Naive thymus-derived CD8-positive, alpha-beta T cell (primary cell): ENCODE measurements at regions of chr6 and their contacts with region 1.

Region 1: GRCh38 chr6:43143235-43144124 is 27.6 kb upstream of the SRF start:
- DNase-seq: peak; percentile 72 to 89 (median 82)
- ATAC-seq: peak; percentile 73 to 80
- H3K4me3 Mint-ChIP-seq: peak overlapping the region; percentile 14 to 94 (median 89)
- H3K27ac Mint-ChIP-seq: peak overlapping the region; percentile 52 to 100 (median 99)
- H3K4me1 Mint-ChIP-seq: peaks cover 16 to 40% (median 31%) of the 10 kb centered on the region in 4 donors
- H3K27me3 Mint-ChIP-seq: no peaks in the 10 kb centered on the region

Region 2: DNA sequence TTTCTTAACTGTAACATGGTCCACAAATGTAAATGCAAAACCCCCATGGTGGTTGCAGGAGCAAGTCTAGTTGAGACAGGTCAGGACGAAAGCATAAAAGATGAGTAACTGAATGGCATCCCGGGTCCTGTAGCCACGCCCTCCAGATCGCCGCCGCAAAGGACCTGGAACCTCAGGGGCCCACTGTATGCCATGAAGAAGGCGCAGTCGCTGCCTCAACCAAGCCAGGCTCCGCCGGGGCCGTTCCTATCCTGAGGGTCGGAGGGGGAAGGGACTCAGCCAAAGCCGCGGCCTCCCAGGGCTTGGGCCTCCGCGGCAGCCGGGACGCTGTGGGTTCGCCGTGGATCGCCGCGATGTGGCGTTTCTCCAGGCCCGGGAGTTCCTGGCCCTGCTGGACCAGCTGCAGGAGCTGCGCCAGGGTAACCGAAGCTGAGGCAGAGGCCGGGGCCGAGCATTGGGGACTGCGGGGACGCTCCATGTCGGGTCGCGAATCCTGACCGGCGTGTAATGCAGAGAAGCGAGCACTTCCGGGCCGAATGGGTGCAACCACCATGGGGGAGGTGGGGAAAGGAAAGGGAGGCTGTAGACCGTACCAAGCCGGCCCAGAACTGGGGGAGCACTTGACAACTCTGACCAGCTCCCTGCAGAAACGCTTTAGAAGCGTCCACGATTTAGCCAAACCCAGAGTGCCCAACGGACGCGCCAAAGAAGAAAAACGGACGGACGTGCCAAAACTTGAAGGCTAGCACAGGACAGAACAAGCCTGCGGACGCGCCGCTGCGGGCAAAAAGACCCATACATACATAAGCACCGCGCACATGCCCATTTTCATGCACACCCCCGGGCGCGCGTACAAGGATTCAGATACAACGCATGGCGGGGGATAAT is 252.9 kb before region 1 on chr6:
- POLR2A ChIA-PET with region 1: interaction called, 17 read pairs
- DNase-seq: peak; percentile 69 to 94 (median 85)
- ATAC-seq: peak; percentile 87 to 94
- H3K4me3 Mint-ChIP-seq: peak overlapping the region; percentile 92 to 99 (median 98)
- H3K27ac Mint-ChIP-seq: peak overlapping the region; percentile 92 to 98 (median 96)
- H3K4me1 Mint-ChIP-seq: peaks cover 7 to 37% (median 19%) of the 10 kb centered on the region in 4 donors
- H3K27me3 Mint-ChIP-seq: no peaks in the 10 kb centered on the region

Region 3: GRCh38 chr6:42978839-42979522 is 164.5 kb before region 1 on chr6 and contains the start of gene PEX6:
- POLR2A ChIA-PET with region 1: interaction called, 13 read pairs
- DNase-seq: peak; percentile 83 to 99 (median 93)
- ATAC-seq: peak; percentile 91 to 93
- H3K4me3 Mint-ChIP-seq: peak within 1 kb of the TSS; percentile 85 to 97 (median 94)
- H3K27ac Mint-ChIP-seq: peak within 1 kb of the TSS; percentile 96 to 100 (median 98)
- H3K4me1 Mint-ChIP-seq: peaks cover 16 to 59% (median 48%) of the 10 kb centered on the region in 4 donors
- H3K27me3 Mint-ChIP-seq: no peaks in the 10 kb centered on the region
- polyA plus RNA-seq, gene PEX6: 17.6 to 30.8 (median 23.6) TPM

Region 4: DNA sequence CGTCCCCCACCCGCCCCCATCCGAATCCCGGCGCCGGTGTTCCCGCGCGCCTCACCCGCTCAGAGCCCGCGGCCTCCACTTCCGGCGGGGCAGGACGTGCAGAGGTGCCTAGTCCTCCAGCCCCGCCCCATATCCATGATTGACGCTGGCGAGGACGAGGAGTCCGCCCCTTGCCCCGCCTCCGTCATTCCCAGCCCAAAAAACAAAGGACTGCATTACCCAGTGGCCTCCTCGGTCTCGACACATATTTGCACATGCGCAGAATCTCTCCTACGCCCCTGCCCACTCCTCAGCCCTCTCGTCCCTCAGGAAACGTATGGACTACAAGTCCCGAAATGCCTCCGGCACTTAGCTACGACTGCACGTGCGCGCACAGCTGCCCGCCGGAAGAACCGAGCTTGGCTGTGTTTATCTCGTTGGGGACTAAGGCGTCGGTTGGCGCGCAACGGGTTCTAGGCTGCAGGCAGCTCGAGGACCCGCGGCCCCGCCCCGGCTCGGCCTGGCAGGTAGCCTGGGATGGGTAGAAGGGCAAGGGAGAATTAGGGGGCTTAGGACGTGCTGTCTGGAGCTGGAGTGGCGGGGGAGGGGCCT is 129.5 kb before region 1 on chr6 and contains the starts of genes KLHDC3 and MEA1:
- POLR2A ChIA-PET with region 1: interaction called, 16 read pairs
- DNase-seq: peak; percentile 93 to 100 (median 99)
- ATAC-seq: peak; percentile 92
- H3K4me3 Mint-ChIP-seq: peak within 1 kb of the TSS; percentile 89 to 97 (median 94)
- H3K27ac Mint-ChIP-seq: peak within 1 kb of the TSS; percentile 82 to 98 (median 95)
- H3K4me1 Mint-ChIP-seq: peaks cover 52 to 82% (median 68%) of the 10 kb centered on the region in 4 donors
- H3K27me3 Mint-ChIP-seq: no peaks in the 10 kb centered on the region
- polyA plus RNA-seq, gene KLHDC3: 107 to 136 (median 117) TPM
- polyA plus RNA-seq, gene MEA1: 73.4 to 90.9 (median 77.5) TPM

Region 5: DNA sequence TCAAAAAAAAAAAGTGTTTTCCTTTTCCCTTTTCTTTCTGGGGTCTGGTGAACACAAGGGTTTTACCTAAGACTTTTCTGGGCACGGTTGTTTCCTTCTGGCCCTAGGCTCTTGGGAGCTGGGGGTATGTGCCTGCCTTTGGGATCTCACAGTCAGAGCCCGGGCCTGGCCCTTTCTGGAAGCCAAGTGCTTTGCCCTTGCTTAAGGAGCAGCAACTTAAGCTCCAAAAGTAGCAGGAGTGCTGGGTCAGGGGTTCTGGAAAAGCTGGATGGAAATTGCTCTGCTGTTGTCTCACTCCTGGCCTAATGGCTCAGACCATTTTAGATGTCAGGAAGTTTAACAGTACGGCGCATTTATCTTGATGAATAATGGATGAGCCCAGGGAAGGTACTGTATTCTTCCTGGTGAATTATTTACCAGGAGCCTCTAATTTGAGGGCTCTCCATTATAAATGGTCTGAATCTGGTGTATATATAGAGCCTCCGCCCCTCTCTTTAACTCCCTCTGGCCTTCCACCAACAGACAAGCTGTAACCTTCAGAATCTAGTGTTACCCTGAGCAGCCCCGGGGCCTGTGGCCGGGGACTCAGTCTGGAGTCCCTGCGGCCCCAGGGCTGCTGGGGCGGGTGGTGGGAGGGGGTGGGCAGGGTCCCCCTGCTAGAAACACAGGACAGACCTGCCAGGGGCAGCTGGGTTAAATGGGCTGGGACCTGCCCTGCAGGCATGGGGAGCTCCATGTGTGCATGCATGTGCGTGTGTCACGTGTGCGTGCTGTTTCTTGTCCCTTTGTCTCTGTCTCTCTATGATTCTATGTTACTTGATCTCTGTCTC is 29.8 kb before region 1 on chr6:
- POLR2A ChIA-PET with region 1: no interaction called
- DNase-seq: no peak
- ATAC-seq: no peak
- H3K4me3 Mint-ChIP-seq: no peak overlapping the region
- H3K27ac Mint-ChIP-seq: peak overlapping the region in 2 of 10 donors; percentile 22 to 38
- H3K4me1 Mint-ChIP-seq: no peaks in the 10 kb centered on the region
- H3K27me3 Mint-ChIP-seq: no peaks in the 10 kb centered on the region